Keratinocyte (primary cell): ENCODE measurements at regions of chr4 and their contacts with region 1.

Region 1: GRCh38 chr4:122612540-122612939 is 8.3 kb downstream of the IL21 start:
- DNase-seq: no peak
- H3K4me3 ChIP-seq: no peak overlapping the region
- H3K27ac ChIP-seq: no peak overlapping the region
- H3K4me1 ChIP-seq: no peaks in the 10 kb centered on the region
- H3K27me3 ChIP-seq: no peaks in the 10 kb centered on the region
- CTCF ChIP-seq: no peak

Region 2: GRCh38 chr4:122383341-122383740 is 229.2 kb before region 1 on chr4:
- dilution Hi-C with region 1: no loop called
- DNase-seq: no peak
- H3K4me3 ChIP-seq: no peak overlapping the region
- H3K27ac ChIP-seq: no peak overlapping the region
- H3K4me1 ChIP-seq: no peaks in the 10 kb centered on the region
- H3K27me3 ChIP-seq: no peaks in the 10 kb centered on the region
- CTCF ChIP-seq: no peak

Region 3: GRCh38 chr4:122661176-122662160 is 48.9 kb after region 1 on chr4:
- dilution Hi-C with region 1: loop called (anchors 5 kb)
- DNase-seq: no peak
- H3K4me3 ChIP-seq: no peak overlapping the region
- H3K27ac ChIP-seq: no peak overlapping the region
- H3K4me1 ChIP-seq: peaks cover 7% of the 10 kb centered on the region
- H3K27me3 ChIP-seq: no peaks in the 10 kb centered on the region
- CTCF ChIP-seq: no peak